PC-9 (cell line): ENCODE measurements at regions of chr7 and their contacts with region 1.

Region 1: DNA sequence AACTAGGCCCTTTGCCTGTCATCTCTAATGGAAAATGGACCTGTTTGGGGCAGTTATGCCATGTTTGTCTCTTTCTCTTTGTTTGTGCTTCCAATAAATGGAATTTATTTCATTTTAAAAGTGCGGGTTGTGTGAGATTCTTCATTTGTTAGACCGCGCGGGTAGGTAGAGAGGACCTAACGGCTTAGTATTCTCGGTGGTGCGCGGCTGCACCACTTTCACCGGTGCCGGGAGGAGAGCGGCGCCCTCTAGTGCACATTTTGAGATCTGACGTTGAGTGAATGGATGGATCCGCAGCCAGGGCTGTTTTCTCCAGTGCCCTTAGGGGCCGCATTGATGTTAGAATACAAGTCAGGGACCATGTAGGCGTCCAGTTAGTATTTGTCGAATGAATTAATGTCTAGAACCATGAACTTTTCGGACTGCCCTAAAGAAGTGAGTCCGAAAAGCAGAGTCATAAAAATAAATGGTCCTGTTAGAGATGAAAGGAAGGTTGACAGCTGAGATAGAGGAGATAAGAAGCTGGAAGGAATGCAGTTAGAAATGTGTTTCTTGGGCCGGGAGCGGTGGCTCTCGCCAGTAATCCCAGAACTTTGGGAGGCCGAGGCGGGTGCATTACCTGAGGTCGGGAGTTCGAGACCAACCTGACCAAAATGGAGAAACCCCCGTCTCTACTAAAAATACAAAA is 29.3 kb upstream of the GIMAP8 start:
- DNase-seq: peak; percentile 62 to 83
- H3K4me3 ChIP-seq: no peak overlapping the region
- H3K27ac ChIP-seq: no peak overlapping the region
- H3K4me1 ChIP-seq: no peaks in the 10 kb centered on the region; the same call in 1 of the 2 replicates
- H3K27me3 ChIP-seq: peaks cover 15% of the 10 kb centered on the region; the same call in 1 of the 2 replicates
- CTCF ChIP-seq: peak; percentile 96

Region 2: GRCh38 chr7:150378853-150379440 is 42.2 kb before region 1 on chr7 and contains the start of gene ZNF775:
- CTCF ChIA-PET with region 1: no interaction called
- POLR2A ChIA-PET with region 1: no interaction called
- intact Hi-C with region 1: loop called (anchors 1 kb)
- DNase-seq: peak; percentile 89 to 99
- H3K4me3 ChIP-seq: peak within 1 kb of the TSS; percentile 89
- H3K27ac ChIP-seq: peak within 1 kb of the TSS; percentile 31
- H3K4me1 ChIP-seq: peaks cover 20% of the 10 kb centered on the region
- H3K27me3 ChIP-seq: no peaks in the 10 kb centered on the region
- CTCF ChIP-seq: no peak
- total RNA-seq, gene ZNF775: 3.1 and 3.4 TPM in 2 replicates

Region 3: DNA sequence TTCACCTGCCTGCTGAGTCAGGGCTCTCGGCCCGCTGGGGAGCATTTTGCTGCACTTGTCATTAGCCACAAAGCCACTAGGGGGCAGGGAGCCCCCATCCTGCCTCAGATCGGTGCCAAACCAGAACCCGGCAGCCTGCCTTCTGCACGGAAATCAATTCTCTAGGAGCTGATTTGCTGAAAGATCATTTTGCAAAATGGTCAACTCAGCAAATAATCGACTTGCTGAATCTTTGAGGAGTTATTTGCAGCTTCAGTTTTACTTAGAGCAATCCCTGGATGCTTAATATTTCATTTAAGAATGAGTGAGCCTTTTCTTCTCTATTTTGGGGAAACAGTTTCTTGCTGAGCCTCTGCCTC is 27.6 kb after region 1 on chr7:
- CTCF ChIA-PET with region 1: no interaction called
- POLR2A ChIA-PET with region 1: no interaction called
- intact Hi-C with region 1: no loop called
- DNase-seq: peak in 1 of 2 experiments; percentile 73
- H3K4me3 ChIP-seq: no peak overlapping the region
- H3K27ac ChIP-seq: no peak overlapping the region
- H3K4me1 ChIP-seq: no peaks in the 10 kb centered on the region
- H3K27me3 ChIP-seq: peaks cover 80% of the 10 kb centered on the region
- CTCF ChIP-seq: peak; percentile 95